Activated B cell treated with CpG ODN at 0.5 μM for 24 hours (primary cell): ENCODE measurements at regions of chr11 and their contacts with region 1.

Region 1: GRCh38 chr11:44556735-44557409 is 8.6 kb upstream of the CD82 start:
- DNase-seq: no peak
- ATAC-seq: peak; percentile 51
- H3K4me3 Mint-ChIP-seq: peak overlapping the region; percentile 49
- H3K27ac Mint-ChIP-seq: peak overlapping the region; percentile 90
- H3K4me1 Mint-ChIP-seq: peaks cover 64% of the 10 kb centered on the region
- H3K27me3 Mint-ChIP-seq: no peaks in the 10 kb centered on the region
- CTCF ChIP-seq: peak; percentile 21

Region 2: DNA sequence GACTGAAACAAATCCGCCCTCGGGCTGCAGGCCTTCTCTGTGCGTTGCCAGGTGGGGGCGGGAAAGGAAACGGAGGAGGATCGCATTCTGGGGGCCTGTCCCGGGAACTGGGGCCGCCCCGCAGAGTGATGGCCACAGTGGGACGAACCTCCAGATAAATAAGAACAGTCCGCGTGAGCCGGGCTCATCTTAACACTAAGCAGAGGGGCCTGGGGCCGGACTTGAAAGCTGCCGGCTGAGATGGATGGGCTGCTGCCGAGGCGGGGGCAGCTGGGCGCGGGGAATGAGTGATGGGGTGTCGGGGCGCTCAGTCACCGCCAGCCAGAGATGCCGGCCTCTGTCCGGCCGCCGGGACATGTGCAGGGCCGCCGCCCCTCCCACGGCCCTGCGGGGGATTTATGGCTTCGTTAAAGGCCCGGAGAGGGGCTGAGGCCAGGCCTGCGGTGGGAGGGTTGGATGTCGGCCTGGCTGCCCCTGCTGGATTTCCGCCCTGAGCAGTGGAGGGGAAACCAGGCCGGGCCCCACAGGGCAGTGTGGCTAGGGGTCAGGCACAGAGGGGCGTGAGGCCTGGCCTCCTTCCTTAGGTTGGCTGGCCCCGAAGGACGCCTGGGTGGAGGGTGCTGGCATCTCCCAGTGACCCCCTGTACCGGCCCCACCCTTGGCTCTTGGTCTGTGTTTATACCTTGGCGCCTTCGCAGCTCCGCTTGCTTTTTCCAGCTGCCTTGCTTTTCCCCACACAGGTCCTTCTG is 36.7 kb before region 1 on chr11:
- CTCF ChIA-PET with region 1: interaction called, 10 read pairs
- POLR2A ChIA-PET with region 1: no interaction called
- intact Hi-C with region 1: no loop called
- DNase-seq: no peak
- ATAC-seq: no peak
- H3K4me3 Mint-ChIP-seq: no peak overlapping the region
- H3K27ac Mint-ChIP-seq: no peak overlapping the region
- H3K4me1 Mint-ChIP-seq: no peaks in the 10 kb centered on the region
- H3K27me3 Mint-ChIP-seq: peaks cover 30% of the 10 kb centered on the region
- CTCF ChIP-seq: no peak

Region 3: DNA sequence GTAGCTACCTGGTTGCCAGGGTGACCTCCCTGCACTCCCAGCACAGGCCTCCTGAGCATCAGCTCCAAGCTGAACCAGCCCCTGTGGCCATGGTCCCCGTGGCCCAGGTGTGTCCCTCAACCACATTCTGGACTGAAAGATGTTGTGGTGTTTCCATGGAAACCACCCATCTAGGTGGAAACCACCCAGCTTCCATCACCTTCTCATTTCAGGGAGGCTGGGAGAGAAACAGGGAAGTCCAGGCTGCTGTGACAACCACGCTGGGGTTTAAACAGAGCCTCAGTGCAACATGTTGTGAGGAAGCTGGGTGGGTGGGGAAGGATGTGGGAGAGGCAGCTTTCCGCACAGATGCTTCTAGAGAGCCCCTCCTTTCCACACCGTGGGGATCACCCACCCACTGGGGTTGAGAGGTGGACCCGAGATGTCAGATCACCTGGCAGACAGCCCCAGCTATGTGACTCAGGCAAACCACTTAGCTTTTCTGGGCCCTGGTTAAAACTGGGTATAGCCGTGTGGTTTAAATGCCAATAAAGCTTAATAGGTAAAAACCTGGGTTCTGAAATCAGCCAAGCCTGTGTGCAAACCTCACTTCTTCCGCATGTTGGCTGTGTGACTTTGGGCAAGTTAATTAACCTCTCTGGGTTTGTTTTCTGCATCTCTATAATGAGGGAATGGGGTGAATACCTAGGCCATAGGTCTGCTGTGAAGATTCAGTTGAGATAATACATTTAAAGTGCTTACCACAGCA is 55.0 kb after region 1 on chr11:
- CTCF ChIA-PET with region 1: interaction called, 398 read pairs
- POLR2A ChIA-PET with region 1: interaction called, 176 read pairs
- intact Hi-C with region 1: loop called (anchors 1 kb)
- DNase-seq: peak; percentile 67
- ATAC-seq: peak; percentile 44
- H3K4me3 Mint-ChIP-seq: peak overlapping the region; percentile 26
- H3K27ac Mint-ChIP-seq: peak overlapping the region; percentile 97
- H3K4me1 Mint-ChIP-seq: peaks cover 100% of the 10 kb centered on the region
- H3K27me3 Mint-ChIP-seq: no peaks in the 10 kb centered on the region
- CTCF ChIP-seq: no peak

Region 4: DNA sequence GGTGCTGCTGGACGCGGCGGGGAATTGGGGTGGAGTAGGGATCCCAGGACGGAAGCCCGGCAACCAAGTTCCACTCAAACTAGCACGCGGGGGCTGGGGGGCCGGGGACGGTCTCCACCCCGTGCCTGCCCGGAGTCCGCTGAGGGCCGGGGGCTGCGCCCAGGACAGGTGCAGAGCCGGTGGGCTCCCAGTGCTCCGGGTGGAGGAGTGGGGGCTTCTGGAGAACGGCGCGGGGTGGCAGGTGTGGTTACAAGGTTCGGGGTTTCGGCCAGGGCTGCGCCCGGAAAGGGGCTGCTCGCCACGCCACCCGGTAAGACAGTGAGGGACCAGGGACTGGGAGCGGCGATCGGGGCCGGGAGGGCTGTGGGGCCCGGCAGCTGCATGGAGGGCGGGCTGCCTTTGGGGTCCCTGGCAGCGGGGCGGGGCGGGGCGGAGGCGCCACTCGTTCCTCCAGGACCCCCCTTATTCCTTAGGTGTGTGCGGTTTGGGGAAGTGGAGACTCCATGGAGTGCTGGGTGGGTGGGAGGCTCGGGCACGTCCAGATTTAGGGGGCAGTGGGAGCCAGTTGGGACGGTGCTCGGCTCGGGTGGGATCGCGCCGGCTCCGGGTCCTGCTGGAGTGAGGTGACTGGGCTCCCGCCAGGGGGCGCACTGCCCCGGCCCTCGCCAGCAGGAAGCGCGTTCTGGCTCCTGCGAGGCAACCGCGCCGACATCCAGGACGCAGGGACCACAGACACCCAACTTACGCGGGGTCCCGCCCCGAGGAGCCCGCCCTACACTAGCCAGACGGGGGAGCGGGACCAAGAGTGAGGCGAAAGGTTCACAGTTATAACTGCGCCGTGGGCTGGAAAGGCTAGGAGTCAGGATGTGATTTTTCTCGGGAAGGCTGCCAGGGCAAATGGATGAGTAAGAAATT is 170.8 kb after region 1 on chr11:
- CTCF ChIA-PET with region 1: interaction called, 3 read pairs
- POLR2A ChIA-PET with region 1: interaction called, 4 read pairs
- intact Hi-C with region 1: loop called (anchors 2 kb)
- DNase-seq: peak; percentile 72
- ATAC-seq: peak; percentile 71
- H3K4me3 Mint-ChIP-seq: peak overlapping the region; percentile 86
- H3K27ac Mint-ChIP-seq: no peak overlapping the region
- H3K4me1 Mint-ChIP-seq: peaks cover 22% of the 10 kb centered on the region
- H3K27me3 Mint-ChIP-seq: peaks cover 15% of the 10 kb centered on the region
- CTCF ChIP-seq: no peak

Region 5: GRCh38 chr11:46332568-46333393 is 1775.9 kb after region 1 on chr11:
- CTCF ChIA-PET with region 1: no interaction called
- POLR2A ChIA-PET with region 1: interaction called, 13 read pairs
- intact Hi-C with region 1: no loop called
- DNase-seq: peak; percentile 42
- ATAC-seq: peak; percentile 49
- H3K4me3 Mint-ChIP-seq: peak overlapping the region; percentile 50
- H3K27ac Mint-ChIP-seq: no peak overlapping the region
- H3K4me1 Mint-ChIP-seq: peaks cover 10% of the 10 kb centered on the region
- H3K27me3 Mint-ChIP-seq: peaks cover 61% of the 10 kb centered on the region
- CTCF ChIP-seq: no peak